Adrenal gland (tissue), 19 donors: ENCODE measurements at regions of chr15 and their contacts with region 1.

Region 1: GRCh38 chr15:52626671-52627369 is 52.4 kb downstream of the ATOSA start:
- DNase-seq: no peak
- H3K4me3 ChIP-seq: no peak overlapping the region
- H3K27ac ChIP-seq: peak overlapping the region in 2 of 5 donors; percentile 13 to 38
- H3K4me1 ChIP-seq: peaks cover 7 to 30% of the 10 kb centered on the region in 2 donors
- H3K27me3 ChIP-seq: no peaks in the 10 kb centered on the region
- CTCF ChIP-seq: no peak
- POLR2A ChIP-seq: no peak

Region 2: GRCh38 chr15:52679232-52680040 is 52.6 kb after region 1 on chr15 and contains the start of gene ATOSA:
- intact Hi-C with region 1: loop called in 1 of 2 experiments (anchors 10 kb)
- DNase-seq: peak; percentile 94 to 98 (median 94)
- H3K4me3 ChIP-seq: peak within 1 kb of the TSS; percentile 30 to 94 (median 74)
- H3K27ac ChIP-seq: peak within 1 kb of the TSS; percentile 86 to 98 (median 94)
- H3K4me1 ChIP-seq: peaks cover 20 to 42% of the 10 kb centered on the region in 2 donors
- H3K27me3 ChIP-seq: no peaks in the 10 kb centered on the region
- CTCF ChIP-seq: no peak
- POLR2A ChIP-seq: peak in 1 of 2 donors; percentile 92
- total RNA-seq, gene ATOSA: 26.0 to 87.3 (median 40.2) TPM